ENCODE measurements at regions of chr10 and their contacts with region 1.

Region 1: DNA sequence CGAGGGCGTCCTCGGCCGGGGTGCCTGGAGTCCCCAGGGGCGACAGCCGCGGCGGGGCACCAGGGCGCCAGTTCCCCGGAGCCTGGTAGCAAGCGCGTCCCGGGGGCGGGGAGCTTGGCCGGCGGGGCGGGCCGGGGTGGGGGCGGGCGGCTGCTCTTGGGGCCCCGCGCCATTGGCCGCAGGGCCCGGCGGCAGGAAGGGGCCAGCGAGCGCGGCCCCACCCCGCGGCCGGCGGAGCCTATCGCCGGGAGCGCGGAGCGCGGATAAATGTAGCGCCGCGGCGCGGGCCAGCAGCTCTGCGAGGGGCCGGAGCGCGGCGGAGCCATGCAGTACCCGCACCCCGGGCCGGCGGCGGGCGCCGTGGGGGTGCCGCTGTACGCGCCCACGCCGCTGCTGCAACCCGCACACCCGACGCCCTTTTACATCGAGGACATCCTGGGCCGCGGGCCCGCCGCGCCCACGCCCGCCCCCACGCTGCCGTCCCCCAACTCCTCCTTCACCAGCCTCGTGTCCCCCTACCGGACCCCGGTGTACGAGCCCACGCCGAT is at the start of gene HHEX:
- DNase-seq: peak; percentile 61 to 86 (median 67)
- ATAC-seq: peak; percentile 48 to 87 (median 71)
- H3K4me3 ChIP-seq: peak within 1 kb of the TSS; percentile 43 to 81 (median 66)
- H3K27ac ChIP-seq: peak within 1 kb of the TSS; percentile 74 to 95 (median 90)
- H3K4me1 ChIP-seq: peaks cover 0 to 52% (median 5%) of the 10 kb centered on the region in 12 donors
- H3K27me3 ChIP-seq: peaks cover 2 to 45% (median 37%) of the 10 kb centered on the region in 9 donors
- CTCF ChIP-seq: peak in 1 of 12 donors; percentile 5
- POLR2A ChIP-seq: peak in 1 of 2 donors; percentile 69
- total RNA-seq, gene HHEX: 1.5 to 14.0 (median 4.1) TPM

Region 2: GRCh38 chr10:92592761-92593618 is 96.7 kb before region 1 on chr10 and contains the start of gene KIF11:
- intact Hi-C with region 1: loop called in 1 of 10 experiments (anchors 5 kb)
- DNase-seq: peak; percentile 97 to 99 (median 98)
- ATAC-seq: peak; percentile 96 to 97 (median 96)
- H3K4me3 ChIP-seq: peak within 1 kb of the TSS; percentile 35 to 94 (median 69)
- H3K27ac ChIP-seq: peak within 1 kb of the TSS; percentile 75 to 97 (median 93)
- H3K4me1 ChIP-seq: peaks cover 0 to 29% (median 12%) of the 10 kb centered on the region in 12 donors
- H3K27me3 ChIP-seq: no peaks in the 10 kb centered on the region
- CTCF ChIP-seq: peak in 1 of 12 donors; percentile 11
- POLR2A ChIP-seq: peak in 1 of 2 donors; percentile 80
- total RNA-seq, gene KIF11: 0.13 to 7.0 (median 0.76) TPM

Region 3: GRCh38 chr10:92657024-92657423 is 32.7 kb before region 1 on chr10:
- intact Hi-C with region 1: no loop called
- DNase-seq: no peak
- ATAC-seq: no peak
- H3K4me3 ChIP-seq: no peak overlapping the region
- H3K27ac ChIP-seq: no peak overlapping the region
- H3K4me1 ChIP-seq: no peaks in the 10 kb centered on the region
- H3K27me3 ChIP-seq: no peaks in the 10 kb centered on the region
- CTCF ChIP-seq: no peak
- POLR2A ChIP-seq: no peak

Region 4: DNA sequence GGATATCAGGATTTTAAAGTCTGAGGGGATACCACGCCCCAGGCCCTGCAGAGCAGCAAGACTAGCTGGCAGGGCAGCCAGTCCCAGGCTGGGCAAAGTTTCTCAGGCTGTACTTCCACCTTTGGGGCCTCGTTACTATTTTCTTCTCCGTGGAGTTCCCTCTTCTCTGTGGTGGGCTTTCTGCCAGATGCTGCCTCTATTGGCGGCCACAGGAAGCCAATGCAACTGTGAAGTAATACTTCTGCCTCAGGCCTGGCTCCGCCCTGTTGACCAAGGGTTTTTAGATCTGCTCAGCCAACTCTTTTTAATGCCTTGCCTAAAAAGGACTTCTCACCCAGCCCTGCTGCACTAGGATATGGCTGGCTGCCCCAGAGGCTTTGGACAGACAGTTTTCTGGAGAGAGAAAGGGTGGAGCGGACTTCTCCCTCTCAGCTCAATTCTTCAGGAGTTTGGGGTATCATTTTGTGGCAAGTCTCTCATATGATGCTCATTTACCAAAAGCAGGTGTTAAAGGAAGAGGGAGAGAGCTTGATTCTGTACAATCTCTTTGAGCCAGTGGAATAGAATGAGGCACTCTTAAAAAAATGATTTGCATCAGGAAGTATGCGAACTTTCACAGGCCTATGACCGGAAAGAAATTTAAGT is 67.5 kb after region 1 on chr10:
- intact Hi-C with region 1: loop called in 5 of 10 experiments (anchors 1 to 10 kb)
- DNase-seq: peak; percentile 85 to 91 (median 87)
- ATAC-seq: peak; percentile 93 to 97 (median 96)
- H3K4me3 ChIP-seq: no peak overlapping the region
- H3K27ac ChIP-seq: peak overlapping the region in 11 of 12 donors; percentile 15 to 83 (median 62)
- H3K4me1 ChIP-seq: peaks cover 0 to 62% (median 19%) of the 10 kb centered on the region in 12 donors
- H3K27me3 ChIP-seq: no peaks in the 10 kb centered on the region
- CTCF ChIP-seq: peak in 4 of 12 donors; percentile 13 to 44 (median 40)
- POLR2A ChIP-seq: no peak

Region 5: DNA sequence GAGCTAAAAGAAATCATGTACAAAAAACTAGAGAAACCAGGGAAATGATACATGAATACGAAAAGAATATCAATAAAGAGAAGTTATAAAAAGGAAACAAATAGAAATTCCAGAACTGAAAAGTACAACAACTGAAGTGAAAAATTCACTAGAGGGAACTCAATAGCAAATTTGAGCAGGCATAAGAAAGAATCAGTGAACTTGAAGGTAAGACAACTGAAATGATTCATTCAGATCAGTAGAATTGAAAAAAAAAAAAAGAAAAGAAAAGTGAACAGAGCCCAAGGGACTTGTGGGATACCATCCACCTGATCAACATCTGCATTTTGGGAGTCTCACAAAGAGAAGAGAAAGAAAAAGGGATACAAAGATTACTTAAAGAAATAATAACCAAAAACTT is 78.4 kb after region 1 on chr10:
- intact Hi-C with region 1: no loop called
- DNase-seq: no peak
- ATAC-seq: no peak
- H3K4me3 ChIP-seq: no peak overlapping the region
- H3K27ac ChIP-seq: no peak overlapping the region
- H3K4me1 ChIP-seq: no peaks in the 10 kb centered on the region
- H3K27me3 ChIP-seq: no peaks in the 10 kb centered on the region
- CTCF ChIP-seq: no peak
- POLR2A ChIP-seq: no peak

Region 6: DNA sequence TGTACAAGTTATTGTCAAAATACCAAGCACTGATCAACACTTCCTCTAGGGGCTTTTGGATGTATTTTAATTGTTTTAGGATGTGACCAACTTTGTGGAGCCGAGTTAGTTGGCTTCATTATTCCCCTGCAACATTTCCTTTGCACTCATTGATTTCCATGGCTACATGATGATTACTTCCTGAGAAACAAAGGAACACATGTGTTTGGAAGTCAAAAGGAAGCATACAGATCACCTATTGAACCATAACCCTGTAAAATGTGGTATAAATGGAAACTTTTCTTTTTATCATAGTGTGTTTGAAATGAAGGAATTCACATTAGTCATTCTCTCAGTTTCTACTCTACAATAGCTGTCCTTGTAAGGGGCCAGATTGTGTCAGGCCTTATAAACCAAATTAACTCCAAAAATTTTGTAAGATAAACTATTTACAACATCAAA is 126.4 kb after region 1 on chr10:
- intact Hi-C with region 1: loop called in 6 of 10 experiments (anchors 2 to 10 kb)
- DNase-seq: no peak
- ATAC-seq: peak in 2 of 4 donors; percentile 34 to 88
- H3K4me3 ChIP-seq: no peak overlapping the region
- H3K27ac ChIP-seq: peak overlapping the region in 2 of 12 donors; percentile 21 to 29
- H3K4me1 ChIP-seq: peaks cover 0 to 13% (median 0%) of the 10 kb centered on the region in 12 donors
- H3K27me3 ChIP-seq: no peaks in the 10 kb centered on the region
- CTCF ChIP-seq: peak in 2 of 12 donors; percentile 15 to 26
- POLR2A ChIP-seq: no peak

Region 7: GRCh38 chr10:92822060-92822634 is 132.4 kb after region 1 on chr10:
- intact Hi-C with region 1: loop called in 6 of 10 experiments (anchors 2 to 10 kb)
- DNase-seq: no peak
- ATAC-seq: peak in 3 of 4 donors; percentile 64 to 86 (median 71)
- H3K4me3 ChIP-seq: no peak overlapping the region
- H3K27ac ChIP-seq: peak overlapping the region in 9 of 12 donors; percentile 1 to 53 (median 37)
- H3K4me1 ChIP-seq: peaks cover 0 to 22% (median 10%) of the 10 kb centered on the region in 12 donors
- H3K27me3 ChIP-seq: no peaks in the 10 kb centered on the region
- CTCF ChIP-seq: no peak
- POLR2A ChIP-seq: no peak

Region 8: DNA sequence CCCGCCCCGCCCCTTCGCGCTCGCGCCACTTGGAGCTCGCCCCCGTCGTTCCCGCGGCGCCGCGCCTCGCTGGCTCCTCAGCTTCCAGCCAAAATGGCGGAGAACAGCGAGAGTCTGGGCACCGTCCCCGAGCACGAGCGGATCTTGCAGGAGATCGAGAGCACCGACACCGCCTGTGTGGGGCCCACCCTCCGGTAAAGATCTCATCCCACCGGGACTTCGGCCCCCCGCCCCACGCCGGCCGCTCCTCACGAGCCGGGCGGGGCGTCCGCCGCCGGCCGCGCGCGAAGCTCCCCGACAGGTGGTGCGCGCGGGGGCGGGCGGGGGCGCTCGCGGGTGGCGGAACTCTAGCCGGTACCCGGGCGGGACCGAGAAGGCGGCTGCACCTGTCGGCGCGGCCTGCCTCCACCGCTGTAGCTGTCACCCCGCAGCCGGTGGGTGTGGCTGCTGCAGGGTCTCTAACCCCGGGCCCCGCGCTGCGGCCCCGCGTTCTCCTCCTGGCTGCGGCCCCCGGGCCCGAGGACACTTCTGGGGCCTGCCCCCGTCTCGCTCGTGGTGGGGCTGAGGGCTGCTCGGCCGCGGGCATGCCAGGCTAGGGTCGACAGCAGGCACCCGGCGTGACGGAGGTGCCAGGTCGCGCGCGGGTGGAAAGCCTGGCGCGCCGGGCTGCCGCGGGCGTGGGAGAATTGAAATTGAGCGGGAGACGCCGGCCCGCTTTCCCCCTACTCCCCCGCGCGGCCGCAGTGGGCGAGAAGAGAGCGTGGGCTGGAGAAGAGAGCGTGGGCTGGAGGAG is 158.9 kb after region 1 on chr10 and contains the start of gene EXOC6:
- intact Hi-C with region 1: loop called in 2 of 10 experiments (anchors 10 kb)
- DNase-seq: peak; percentile 85 to 91 (median 87)
- ATAC-seq: peak; percentile 69 to 93 (median 90)
- H3K4me3 ChIP-seq: peak within 1 kb of the TSS; percentile 71 to 100 (median 98)
- H3K27ac ChIP-seq: peak within 1 kb of the TSS; percentile 79 to 95 (median 90)
- H3K4me1 ChIP-seq: peaks cover 0 to 42% (median 10%) of the 10 kb centered on the region in 12 donors
- H3K27me3 ChIP-seq: no peaks in the 10 kb centered on the region
- CTCF ChIP-seq: peak in 5 of 12 donors; percentile 7 to 29 (median 13)
- POLR2A ChIP-seq: no peak
- total RNA-seq, gene EXOC6: 7.8 to 12.3 (median 10.0) TPM

Measured in heart left ventricle (tissue), 16 donors.